Activated CD8-positive, alpha-beta memory T cell treated with anti-CD3 and anti-CD28 coated beads, Interleukin-2, amount 10 ng/mL, durations not matched to agents 7 days and 5 days (primary cell): ENCODE measurements at regions of chr9 and their contacts with region 1.

Region 1: GRCh38 chr9:124126571-124127289 is 115.2 kb downstream of the LHX2 start:
- DNase-seq: peak; percentile 84
- ATAC-seq: peak; percentile 83
- H3K4me3 Mint-ChIP-seq: no peak overlapping the region
- H3K27ac Mint-ChIP-seq: no peak overlapping the region
- H3K4me1 Mint-ChIP-seq: peaks cover 3% of the 10 kb centered on the region
- H3K27me3 Mint-ChIP-seq: peaks cover 10% of the 10 kb centered on the region

Region 2: DNA sequence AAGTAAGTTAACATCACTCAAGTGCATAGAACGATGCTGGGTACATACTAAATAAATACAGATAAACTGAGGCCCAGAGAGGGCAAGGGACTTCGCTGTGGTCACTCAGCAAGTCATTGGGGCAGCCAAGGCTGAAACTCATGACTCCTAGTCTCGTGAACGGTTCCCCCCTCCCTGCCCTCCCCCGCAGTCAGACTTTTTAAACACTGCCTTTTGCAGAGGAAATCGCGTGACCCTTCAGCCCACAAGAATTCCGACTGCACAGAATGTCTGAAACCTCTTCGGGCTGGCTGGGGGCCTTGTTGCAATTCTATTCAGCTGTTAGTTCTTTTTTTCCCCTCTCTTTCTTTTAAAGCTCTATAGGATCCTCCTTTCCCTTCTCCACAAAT is 159.2 kb after region 1 on chr9:
- CTCF ChIA-PET with region 1: interaction called, 12 read pairs
- DNase-seq: peak; percentile 81
- ATAC-seq: peak; percentile 52
- H3K4me3 Mint-ChIP-seq: peak overlapping the region; percentile 44
- H3K27ac Mint-ChIP-seq: peak overlapping the region; percentile 95
- H3K4me1 Mint-ChIP-seq: peaks cover 33% of the 10 kb centered on the region
- H3K27me3 Mint-ChIP-seq: no peaks in the 10 kb centered on the region

Region 3: GRCh38 chr9:124320062-124320973 is 193.6 kb after region 1 on chr9:
- CTCF ChIA-PET with region 1: interaction called, 16 read pairs
- DNase-seq: peak; percentile 59
- ATAC-seq: peak; percentile 78
- H3K4me3 Mint-ChIP-seq: no peak overlapping the region
- H3K27ac Mint-ChIP-seq: no peak overlapping the region
- H3K4me1 Mint-ChIP-seq: peaks cover 3% of the 10 kb centered on the region
- H3K27me3 Mint-ChIP-seq: no peaks in the 10 kb centered on the region

Region 4: DNA sequence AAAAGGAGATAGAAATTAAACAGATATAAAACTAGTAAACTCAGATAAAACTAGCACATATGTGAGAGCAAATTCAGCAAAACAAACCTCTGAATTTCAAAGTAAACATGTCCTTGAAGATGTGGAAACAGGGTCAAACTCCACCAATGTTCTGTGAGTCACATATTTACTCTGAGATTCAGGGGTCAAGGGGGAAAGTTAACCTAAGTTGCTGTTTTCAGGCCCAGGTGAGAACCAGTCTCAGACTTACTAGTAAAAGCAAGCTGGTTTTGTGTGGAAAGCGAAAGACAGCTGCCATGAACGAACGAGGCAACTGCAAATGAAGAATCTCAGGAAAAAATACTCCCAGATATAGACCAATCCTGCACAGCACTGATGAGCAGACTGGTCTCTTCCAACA is 259.5 kb after region 1 on chr9:
- CTCF ChIA-PET with region 1: interaction called, 17 read pairs
- DNase-seq: no peak
- ATAC-seq: no peak
- H3K4me3 Mint-ChIP-seq: no peak overlapping the region
- H3K27ac Mint-ChIP-seq: no peak overlapping the region
- H3K4me1 Mint-ChIP-seq: peaks cover 10% of the 10 kb centered on the region
- H3K27me3 Mint-ChIP-seq: no peaks in the 10 kb centered on the region